Sigmoid colon (tissue), 7 donors: ENCODE measurements at regions of chr19 and their contacts with region 1.

Region 1: GRCh38 chr19:2096480-2097329 is at the start of gene IZUMO4:
- DNase-seq: peak; percentile 99
- H3K4me3 ChIP-seq: peak within 1 kb of the TSS; percentile 63 to 87 (median 74)
- H3K27ac ChIP-seq: peak within 1 kb of the TSS; percentile 88 to 99 (median 93)
- H3K4me1 ChIP-seq: peaks cover 0 to 52% (median 44%) of the 10 kb centered on the region in 4 donors
- H3K27me3 ChIP-seq: no peaks in the 10 kb centered on the region
- CTCF ChIP-seq: peak in 3 of 4 experiments; percentile 30 to 38 (median 34)
- EP300 ChIP-seq: no peak
- POLR2A ChIP-seq: no peak
- total RNA-seq, gene IZUMO4: 2.3 to 6.0 (median 4.6) TPM

Region 2: DNA sequence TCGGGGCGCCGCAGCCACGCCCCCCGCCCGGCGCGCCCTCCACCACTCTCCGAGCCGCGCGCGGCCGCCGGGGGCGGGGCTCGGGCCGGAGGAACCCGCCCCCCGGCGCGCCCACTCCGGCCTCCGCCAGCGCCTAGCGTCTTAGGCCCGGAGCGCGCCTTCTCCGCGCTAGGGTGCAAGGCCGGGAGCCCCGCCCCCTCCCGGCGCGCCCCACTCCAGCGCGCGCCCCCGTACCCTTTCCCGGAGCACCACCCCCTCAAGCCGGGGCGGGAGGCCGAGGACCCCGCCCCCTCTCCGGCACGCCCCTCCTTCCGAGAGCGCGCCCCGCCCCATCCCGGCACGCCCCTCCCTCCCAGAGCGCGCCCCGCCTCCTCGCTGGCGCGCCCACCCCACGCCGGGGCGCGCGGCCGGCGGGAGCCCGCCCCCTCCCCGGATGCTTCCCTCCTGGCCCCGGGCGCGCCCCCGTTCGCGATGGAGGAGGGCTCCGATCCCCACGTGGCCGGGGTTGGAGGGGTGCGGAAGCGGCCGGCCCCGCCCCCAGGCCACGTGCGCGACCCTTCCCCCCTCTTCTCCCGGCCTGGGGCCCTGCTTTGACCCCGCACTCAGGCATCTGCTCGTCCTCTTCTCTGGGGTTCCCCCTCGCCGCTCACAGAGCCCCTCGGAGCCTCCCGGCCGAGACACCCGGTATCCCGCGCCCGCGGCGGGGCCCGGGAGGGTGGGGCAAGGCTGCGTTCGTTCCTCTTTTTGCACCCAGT is 232.8 kb before region 1 on chr19:
- intact Hi-C with region 1: loop called (anchors 5 kb)
- DNase-seq: peak; percentile 94
- H3K4me3 ChIP-seq: peak overlapping the region; percentile 63 to 80 (median 78)
- H3K27ac ChIP-seq: peak overlapping the region; percentile 84 to 91 (median 86)
- H3K4me1 ChIP-seq: peaks cover 0 to 47% (median 38%) of the 10 kb centered on the region in 4 donors
- H3K27me3 ChIP-seq: peaks cover 0 to 30% (median 3%) of the 10 kb centered on the region in 3 donors
- CTCF ChIP-seq: no peak
- EP300 ChIP-seq: no peak
- POLR2A ChIP-seq: no peak

Region 3: GRCh38 chr19:2061495-2062381 is 35.0 kb before region 1 on chr19:
- intact Hi-C with region 1: loop called (anchors 2 kb)
- DNase-seq: peak; percentile 100
- H3K4me3 ChIP-seq: peak overlapping the region; percentile 63 to 89 (median 72)
- H3K27ac ChIP-seq: peak overlapping the region; percentile 95 to 100 (median 100)
- H3K4me1 ChIP-seq: peaks cover 0 to 64% (median 58%) of the 10 kb centered on the region in 4 donors
- H3K27me3 ChIP-seq: no peaks in the 10 kb centered on the region
- CTCF ChIP-seq: no peak
- EP300 ChIP-seq: peak in 1 of 4 donors; percentile 71
- POLR2A ChIP-seq: peak; percentile 22 to 69

Region 4: DNA sequence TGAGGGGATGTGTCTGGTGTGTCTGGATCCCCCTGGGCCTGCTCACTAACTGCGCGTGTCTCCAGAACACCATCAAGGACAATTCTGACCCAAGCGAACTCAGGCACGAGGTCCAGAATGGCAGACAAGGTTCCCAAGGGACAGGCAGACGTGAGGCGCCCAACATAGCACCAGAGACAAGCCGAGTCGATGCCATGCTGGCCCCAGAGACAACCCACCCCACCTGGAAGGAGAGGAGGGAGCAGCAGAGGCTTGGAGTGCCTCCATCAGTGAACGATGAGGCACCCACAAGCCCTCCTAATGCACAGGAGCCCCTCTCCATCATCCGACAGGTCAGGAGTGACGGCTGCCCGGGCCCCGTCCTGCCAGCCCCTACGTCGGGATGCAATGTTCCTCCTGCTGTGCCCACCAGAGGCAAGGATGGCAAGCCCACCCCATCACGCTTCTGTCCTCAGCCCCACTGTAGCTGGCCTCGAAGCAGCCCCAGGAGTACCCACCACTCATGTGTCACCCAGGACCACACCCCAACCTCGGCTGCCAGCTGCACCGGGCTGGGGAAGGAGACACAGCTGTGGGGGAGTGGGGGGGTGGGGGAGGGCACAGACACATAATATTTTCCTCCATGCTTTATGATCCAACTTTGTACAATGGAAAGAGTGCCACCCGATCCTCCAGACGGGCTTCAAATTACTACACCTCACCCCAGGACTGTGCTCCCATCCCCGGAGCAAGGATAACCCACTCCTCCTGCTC is 42.9 kb after region 1 on chr19:
- intact Hi-C with region 1: no loop called
- DNase-seq: no peak
- H3K4me3 ChIP-seq: no peak overlapping the region
- H3K27ac ChIP-seq: no peak overlapping the region
- H3K4me1 ChIP-seq: no peaks in the 10 kb centered on the region
- H3K27me3 ChIP-seq: no peaks in the 10 kb centered on the region
- CTCF ChIP-seq: no peak
- EP300 ChIP-seq: no peak
- POLR2A ChIP-seq: no peak

Region 5: GRCh38 chr19:2221918-2222317 is 125.2 kb after region 1 on chr19:
- intact Hi-C with region 1: no loop called
- DNase-seq: no peak
- H3K4me3 ChIP-seq: no peak overlapping the region
- H3K27ac ChIP-seq: peak overlapping the region in 1 of 4 donors; percentile 33
- H3K4me1 ChIP-seq: peaks cover 0 to 11% (median 0%) of the 10 kb centered on the region in 4 donors
- H3K27me3 ChIP-seq: no peaks in the 10 kb centered on the region
- CTCF ChIP-seq: peak in 2 of 4 experiments; percentile 19 to 24
- EP300 ChIP-seq: no peak
- POLR2A ChIP-seq: no peak